Common myeloid progenitor, CD34-positive (primary cell): ENCODE measurements at regions of chr10 and their contacts with region 1.

Region 1: GRCh38 chr10:93554760-93555432 is 11.6 kb upstream of the FFAR4 start:
- DNase-seq: peak; percentile 80 to 90 (median 87)
- H3K4me3 ChIP-seq: peak overlapping the region in 4 of 7 experiments; percentile 9 to 72 (median 51)
- H3K27ac ChIP-seq: no peak overlapping the region
- H3K4me1 ChIP-seq: peaks cover 0 to 5% (median 2%) of the 10 kb centered on the region in 4 experiments
- H3K27me3 ChIP-seq: no peaks in the 10 kb centered on the region

Region 2: GRCh38 chr10:93576888-93577287 is 22.0 kb after region 1 on chr10:
- CTCF ChIA-PET with region 1: interaction called, 10 read pairs
- POLR2A ChIA-PET with region 1: no interaction called
- DNase-seq: no peak
- H3K4me3 ChIP-seq: no peak overlapping the region
- H3K27ac ChIP-seq: no peak overlapping the region
- H3K4me1 ChIP-seq: peaks cover 2 to 31% (median 21%) of the 10 kb centered on the region in 4 experiments
- H3K27me3 ChIP-seq: no peaks in the 10 kb centered on the region

Region 3: DNA sequence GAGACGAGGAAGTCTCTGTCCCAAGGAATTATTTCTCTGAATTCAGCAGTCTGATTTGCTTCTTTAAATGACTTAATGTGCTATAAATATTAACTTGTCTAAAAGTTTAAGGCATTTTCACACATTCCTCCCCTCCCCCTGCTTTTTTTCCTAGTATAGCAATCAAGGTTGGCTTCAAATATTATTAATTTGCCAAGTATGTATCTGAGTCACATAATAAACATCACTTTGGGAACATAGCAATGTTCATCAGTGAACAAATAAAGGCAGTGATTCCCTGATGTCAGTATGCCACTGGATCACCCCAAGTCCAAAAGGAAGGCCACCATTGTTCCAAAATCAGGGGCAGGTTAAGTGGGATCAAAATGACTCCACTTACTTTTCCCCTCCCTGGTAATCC is 98.0 kb after region 1 on chr10:
- CTCF ChIA-PET with region 1: no interaction called
- POLR2A ChIA-PET with region 1: no interaction called
- DNase-seq: no peak
- H3K4me3 ChIP-seq: no peak overlapping the region
- H3K27ac ChIP-seq: no peak overlapping the region
- H3K4me1 ChIP-seq: no peaks in the 10 kb centered on the region
- H3K27me3 ChIP-seq: no peaks in the 10 kb centered on the region

Region 4: DNA sequence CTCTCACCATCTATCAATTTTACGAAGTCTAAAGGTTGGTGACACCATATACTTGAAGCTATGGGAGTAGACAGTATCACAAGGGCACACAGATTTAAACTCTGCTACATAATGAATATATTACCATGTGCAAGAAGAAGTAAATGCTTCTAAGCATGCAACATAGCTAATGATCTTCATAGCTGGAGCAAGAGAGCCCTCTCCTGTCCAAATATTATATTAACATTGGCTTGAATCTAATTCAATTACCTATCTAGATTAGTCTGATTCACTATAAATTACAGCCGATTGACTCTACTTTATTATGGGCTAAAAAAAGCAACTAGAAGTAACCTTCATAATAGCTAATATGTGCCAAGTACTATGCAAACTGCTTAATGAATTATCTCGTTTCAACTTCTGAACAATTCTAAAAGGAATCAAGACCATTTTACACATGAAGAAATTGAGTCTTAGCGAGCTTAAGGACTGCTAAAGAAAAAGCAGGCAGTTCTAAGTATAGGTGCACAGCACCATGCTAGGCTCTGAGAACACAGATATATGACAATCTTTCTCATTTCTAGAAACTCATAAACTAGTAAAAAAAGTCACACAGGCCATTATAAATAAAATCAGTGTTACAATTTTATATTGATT is 125.6 kb after region 1 on chr10:
- CTCF ChIA-PET with region 1: interaction called, 184 read pairs
- POLR2A ChIA-PET with region 1: no interaction called
- DNase-seq: peak; percentile 62 to 78 (median 71)
- H3K4me3 ChIP-seq: no peak overlapping the region
- H3K27ac ChIP-seq: no peak overlapping the region
- H3K4me1 ChIP-seq: no peaks in the 10 kb centered on the region
- H3K27me3 ChIP-seq: no peaks in the 10 kb centered on the region